GM13976 (cell line): ENCODE measurements at regions of chr9 and their contacts with region 1.

Region 1: GRCh38 chr9:34603610-34604231 is 8.2 kb downstream of the RPP25L start:
- DNase-seq: peak; percentile 87
- CTCF ChIP-seq: peak; percentile 89

Region 2: GRCh38 chr9:34403554-34404380 is 200.0 kb before region 1 on chr9:
- in situ Hi-C with region 1: loop called (anchors 10 kb)
- DNase-seq: peak; percentile 59
- CTCF ChIP-seq: peak; percentile 94

Region 3: DNA sequence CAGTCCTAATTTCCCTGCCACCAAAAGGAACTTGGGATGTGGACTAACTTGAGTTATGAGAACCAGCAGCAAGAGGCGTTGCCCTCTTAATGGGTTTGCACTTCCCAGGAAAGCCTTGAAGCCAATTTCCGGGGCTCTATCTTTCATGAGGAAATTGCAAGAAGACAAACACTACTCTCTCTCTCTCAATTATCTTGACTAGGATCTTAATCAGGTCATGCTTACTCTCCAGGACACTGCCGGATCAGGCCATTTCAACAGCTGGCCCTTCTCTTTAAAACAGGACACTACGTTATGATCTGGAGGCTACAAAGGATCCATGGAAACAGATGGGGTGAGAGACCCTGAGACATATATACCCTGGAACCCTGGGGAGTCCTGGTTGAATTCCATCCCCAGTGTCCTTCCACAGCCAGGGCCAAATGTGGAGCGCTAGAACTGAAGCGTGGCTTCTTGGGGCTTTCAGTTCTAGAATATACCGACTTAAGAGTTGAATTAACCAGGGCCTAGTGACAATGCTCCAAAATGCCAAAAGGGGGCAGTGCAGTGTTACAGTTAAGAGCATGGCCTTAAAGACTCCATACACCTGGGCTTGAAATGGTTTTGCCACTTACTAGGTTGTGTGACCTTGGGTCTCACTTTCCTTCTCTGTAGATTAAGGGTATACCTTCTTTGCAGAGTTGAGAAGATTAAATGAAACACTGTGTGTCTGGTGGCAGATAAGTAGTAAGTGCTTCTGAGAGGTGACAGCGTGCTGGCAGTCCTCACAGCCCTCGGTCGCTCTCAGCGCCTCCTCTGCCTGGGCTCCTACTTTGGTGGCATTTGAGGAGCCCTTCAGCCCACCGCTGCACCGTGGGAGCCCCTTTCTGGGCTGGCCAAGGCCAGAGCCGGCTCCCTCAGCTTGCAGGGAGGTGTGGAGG is 166.5 kb before region 1 on chr9:
- in situ Hi-C with region 1: loop called (anchors 10 kb)
- DNase-seq: peak; percentile 78
- CTCF ChIP-seq: peak; percentile 66